BJ (cell line): ENCODE measurements at regions of chr11 and their contacts with region 1.

Region 1: GRCh38 chr11:102666331-102666957 is 39.1 kb downstream of the MMP27 start:
- DNase-seq: no peak
- H3K4me3 ChIP-seq: no peak overlapping the region
- H3K27me3 ChIP-seq: peaks cover 2% of the 10 kb centered on the region; the same call in 1 of the 2 replicates
- CTCF ChIP-seq: peak; percentile 89

Region 2: GRCh38 chr11:102287964-102288724 is 378.3 kb before region 1 on chr11:
- CTCF ChIA-PET with region 1: interaction called, 29 read pairs
- POLR2A ChIA-PET with region 1: no interaction called
- DNase-seq: no peak
- H3K4me3 ChIP-seq: no peak overlapping the region
- H3K27me3 ChIP-seq: no peaks in the 10 kb centered on the region
- CTCF ChIP-seq: peak; percentile 68

Region 3: DNA sequence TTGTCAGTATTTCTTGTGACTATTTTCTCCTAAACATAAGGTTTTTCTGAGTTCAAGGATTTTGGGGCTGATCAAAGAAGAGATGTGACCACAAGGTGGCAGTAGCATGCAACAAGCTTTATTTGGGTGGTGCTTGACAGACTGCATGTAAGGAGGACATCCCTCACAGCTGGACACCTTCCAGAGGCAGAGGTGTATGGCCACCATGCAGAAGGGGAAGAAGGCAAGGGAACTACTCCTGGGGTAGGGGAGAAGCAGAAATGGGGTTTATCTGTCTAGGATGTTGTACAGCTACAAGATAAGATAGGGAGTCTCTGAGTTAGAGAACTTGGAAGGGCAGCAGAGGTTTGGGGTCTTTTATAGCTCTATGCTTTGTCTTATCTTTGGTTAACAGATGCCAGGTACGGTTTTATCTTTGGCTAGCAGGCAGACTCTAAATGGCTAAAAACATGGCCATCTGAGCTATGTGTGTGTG is 324.6 kb before region 1 on chr11:
- CTCF ChIA-PET with region 1: interaction called, 21 read pairs
- POLR2A ChIA-PET with region 1: no interaction called
- DNase-seq: no peak
- H3K4me3 ChIP-seq: no peak overlapping the region
- H3K27me3 ChIP-seq: no peaks in the 10 kb centered on the region
- CTCF ChIP-seq: peak; percentile 81

Region 4: GRCh38 chr11:102495161-102496042 is 171.0 kb before region 1 on chr11:
- CTCF ChIA-PET with region 1: interaction called, 13 read pairs
- POLR2A ChIA-PET with region 1: no interaction called
- DNase-seq: no peak
- H3K4me3 ChIP-seq: no peak overlapping the region
- H3K27me3 ChIP-seq: no peaks in the 10 kb centered on the region
- CTCF ChIP-seq: peak; percentile 53

Region 5: DNA sequence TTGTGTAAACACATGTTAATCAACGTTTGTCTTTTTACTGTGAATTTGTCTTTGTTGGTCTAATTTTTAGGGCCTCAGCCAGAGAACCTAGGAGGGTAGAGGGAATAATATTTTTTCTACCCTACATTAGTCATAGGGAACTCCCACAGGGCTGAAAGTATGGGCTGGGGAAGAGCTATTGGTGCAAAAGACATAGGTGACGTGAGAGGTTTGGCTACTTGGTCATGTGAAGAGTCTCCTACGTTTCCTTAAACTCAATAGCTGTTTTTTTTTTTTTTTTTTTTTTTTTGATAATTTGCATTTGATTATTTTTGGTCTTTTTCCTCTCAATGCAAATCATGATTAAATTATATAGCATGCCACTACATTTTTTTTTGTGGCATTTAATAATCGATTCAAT is 120.0 kb before region 1 on chr11:
- CTCF ChIA-PET with region 1: no interaction called
- POLR2A ChIA-PET with region 1: no interaction called
- DNase-seq: no peak
- H3K4me3 ChIP-seq: no peak overlapping the region
- H3K27me3 ChIP-seq: no peaks in the 10 kb centered on the region; the same call in 1 of the 2 replicates
- CTCF ChIP-seq: no peak

Region 6: GRCh38 chr11:102637731-102638130 is 28.7 kb before region 1 on chr11:
- CTCF ChIA-PET with region 1: no interaction called
- POLR2A ChIA-PET with region 1: no interaction called
- DNase-seq: no peak
- H3K4me3 ChIP-seq: no peak overlapping the region
- H3K27me3 ChIP-seq: peaks cover 8% of the 10 kb centered on the region
- CTCF ChIP-seq: no peak

Region 7: GRCh38 chr11:102653744-102654291 is 12.6 kb before region 1 on chr11:
- CTCF ChIA-PET with region 1: interaction called, 21 read pairs
- POLR2A ChIA-PET with region 1: no interaction called
- DNase-seq: no peak
- H3K4me3 ChIP-seq: no peak overlapping the region
- H3K27me3 ChIP-seq: peaks cover 2% of the 10 kb centered on the region; the same call in 1 of the 2 replicates
- CTCF ChIP-seq: no peak